CD4-positive, alpha-beta T cell (primary cell): ENCODE measurements at regions of chrX and their contacts with region 1.

Region 1: DNA sequence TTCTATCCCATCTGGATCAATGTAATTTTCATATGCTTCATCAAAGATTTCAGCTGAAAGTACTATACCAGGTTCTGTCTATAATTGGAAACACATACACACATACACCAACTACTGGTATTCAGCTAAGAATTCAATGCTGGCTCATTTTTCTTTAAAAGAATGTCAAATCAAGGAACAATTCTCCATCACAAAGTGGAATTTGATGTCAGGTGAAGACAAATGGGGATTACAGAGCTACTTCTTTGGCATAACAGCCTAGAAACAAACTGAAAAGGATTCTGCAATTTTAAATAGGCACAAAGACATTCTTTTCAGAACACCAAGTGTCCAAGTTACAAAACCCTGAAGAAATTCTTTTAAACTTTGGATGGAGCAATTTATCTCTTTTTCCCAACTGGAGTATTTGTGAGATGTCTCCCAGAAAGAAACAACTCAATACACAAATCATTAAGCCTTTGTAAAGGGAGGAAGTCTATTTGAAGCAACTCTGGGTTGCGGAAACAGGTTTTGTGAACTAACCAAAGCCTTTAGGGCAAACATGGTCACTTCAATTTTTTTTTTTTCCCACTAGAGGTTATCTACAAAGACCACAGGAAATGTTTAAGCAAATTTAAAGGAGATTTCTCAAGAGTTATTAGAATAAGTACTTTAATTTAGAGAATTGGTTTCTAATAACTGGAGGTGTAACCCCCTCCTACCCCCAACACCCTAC is 1.9 kb upstream of the FAM9C start:
- DNase-seq: no peak
- ATAC-seq: no peak
- H3K4me3 ChIP-seq: no peak overlapping the region
- H3K4me3 Mint-ChIP-seq: no peak overlapping the region
- H3K27ac ChIP-seq: no peak overlapping the region
- H3K27ac Mint-ChIP-seq: peak overlapping the region; percentile 83
- H3K4me1 ChIP-seq: peaks cover 37% of the 10 kb centered on the region
- H3K4me1 Mint-ChIP-seq: peaks cover 63% of the 10 kb centered on the region
- H3K27me3 ChIP-seq: no peaks in the 10 kb centered on the region
- H3K27me3 Mint-ChIP-seq: no peaks in the 10 kb centered on the region
- CTCF ChIP-seq: no peak

Region 2: GRCh38 chrX:12771445-12772069 is 274.7 kb before region 1 on chrX:
- CTCF ChIA-PET with region 1: no interaction called
- POLR2A ChIA-PET with region 1: no interaction called
- intact Hi-C with region 1: no loop called
- DNase-seq: peak; percentile 51 to 89 (median 66)
- ATAC-seq: peak; percentile 100
- H3K4me3 ChIP-seq: no peak overlapping the region
- H3K4me3 Mint-ChIP-seq: peak overlapping the region; percentile 48
- H3K27ac ChIP-seq: no peak overlapping the region
- H3K27ac Mint-ChIP-seq: no peak overlapping the region
- H3K4me1 ChIP-seq: peaks cover 6% of the 10 kb centered on the region
- H3K4me1 Mint-ChIP-seq: peaks cover 13% of the 10 kb centered on the region
- H3K27me3 ChIP-seq: peaks cover 0 to 3% of the 10 kb centered on the region in 2 experiments
- H3K27me3 Mint-ChIP-seq: peaks cover 4% of the 10 kb centered on the region
- CTCF ChIP-seq: peak; percentile 61

Region 3: DNA sequence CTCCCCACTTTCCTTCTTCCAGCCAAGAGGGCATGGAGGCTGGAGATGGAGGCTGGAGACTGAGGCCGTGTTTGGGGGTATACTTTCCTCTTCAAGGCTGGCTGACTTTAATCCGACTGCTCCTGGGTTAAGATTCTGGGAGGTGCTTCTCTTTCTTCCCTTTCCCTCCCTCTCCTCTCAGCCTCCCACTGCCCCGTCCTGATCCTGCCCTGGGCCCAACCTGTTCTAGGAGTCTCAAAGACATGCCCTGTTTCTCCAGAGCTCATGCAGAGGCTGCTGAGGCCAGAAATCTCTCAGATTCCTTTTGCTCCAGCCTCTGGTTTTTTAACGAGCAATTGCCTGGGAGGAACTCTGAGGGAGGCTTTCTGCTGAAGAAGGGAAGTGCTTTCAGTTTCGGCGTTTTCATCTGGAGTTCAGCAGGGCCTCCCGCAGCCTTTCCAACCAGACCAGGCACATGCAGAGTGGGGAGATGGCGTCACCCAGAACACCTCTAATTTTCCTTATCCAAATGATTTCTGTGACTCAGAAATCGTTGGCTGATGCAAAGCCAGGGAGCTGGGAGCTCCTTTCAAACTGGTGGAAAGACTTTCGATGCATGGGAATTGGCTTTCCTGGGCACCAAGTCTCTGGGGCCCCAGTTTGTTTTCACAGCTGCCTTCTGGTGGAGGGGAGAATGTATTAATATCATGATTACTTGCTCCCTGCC is 32.6 kb after region 1 on chrX:
- CTCF ChIA-PET with region 1: interaction called, 6 read pairs
- POLR2A ChIA-PET with region 1: interaction called, 239 read pairs
- intact Hi-C with region 1: loop called (anchors 2 kb)
- DNase-seq: peak in 4 of 14 experiments; percentile 34 to 56 (median 48)
- ATAC-seq: no peak
- H3K4me3 ChIP-seq: peak overlapping the region; percentile 28
- H3K4me3 Mint-ChIP-seq: peak overlapping the region; percentile 62
- H3K27ac ChIP-seq: peak overlapping the region; percentile 62
- H3K27ac Mint-ChIP-seq: peak overlapping the region; percentile 95
- H3K4me1 ChIP-seq: peaks cover 76% of the 10 kb centered on the region
- H3K4me1 Mint-ChIP-seq: peaks cover 96% of the 10 kb centered on the region
- H3K27me3 ChIP-seq: no peaks in the 10 kb centered on the region
- H3K27me3 Mint-ChIP-seq: no peaks in the 10 kb centered on the region
- CTCF ChIP-seq: no peak